ENCODE measurements at regions of chr13 and their contacts with region 1.

Region 1: DNA sequence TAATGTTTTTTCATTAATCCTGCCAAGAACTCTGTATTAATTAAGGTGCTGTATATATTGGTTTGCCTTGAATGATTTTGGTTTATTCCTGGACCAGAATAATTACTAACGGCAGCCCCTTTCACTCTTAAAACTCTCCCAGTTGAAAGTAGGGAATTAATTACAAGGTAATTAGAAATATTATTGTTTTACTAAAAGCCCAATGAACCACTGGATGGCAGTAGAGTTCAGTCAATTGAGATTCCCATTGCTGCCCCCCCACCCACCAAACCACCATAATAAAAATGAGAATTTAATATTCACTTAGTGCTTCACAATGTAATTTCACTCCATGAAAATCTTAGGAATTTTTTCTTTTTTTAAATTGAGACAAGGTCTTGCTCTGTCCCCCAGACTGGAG is 13.7 kb downstream of the WBP4 start:
- DNase-seq: no peak
- H3K4me3 ChIP-seq: no peak overlapping the region
- H3K27ac ChIP-seq: no peak overlapping the region
- H3K4me1 ChIP-seq: no peaks in the 10 kb centered on the region
- H3K27me3 ChIP-seq: no peaks in the 10 kb centered on the region
- CTCF ChIP-seq: peak; percentile 36 to 48 (median 46)
- EP300 ChIP-seq: no peak
- POLR2A ChIP-seq: no peak

Region 2: DNA sequence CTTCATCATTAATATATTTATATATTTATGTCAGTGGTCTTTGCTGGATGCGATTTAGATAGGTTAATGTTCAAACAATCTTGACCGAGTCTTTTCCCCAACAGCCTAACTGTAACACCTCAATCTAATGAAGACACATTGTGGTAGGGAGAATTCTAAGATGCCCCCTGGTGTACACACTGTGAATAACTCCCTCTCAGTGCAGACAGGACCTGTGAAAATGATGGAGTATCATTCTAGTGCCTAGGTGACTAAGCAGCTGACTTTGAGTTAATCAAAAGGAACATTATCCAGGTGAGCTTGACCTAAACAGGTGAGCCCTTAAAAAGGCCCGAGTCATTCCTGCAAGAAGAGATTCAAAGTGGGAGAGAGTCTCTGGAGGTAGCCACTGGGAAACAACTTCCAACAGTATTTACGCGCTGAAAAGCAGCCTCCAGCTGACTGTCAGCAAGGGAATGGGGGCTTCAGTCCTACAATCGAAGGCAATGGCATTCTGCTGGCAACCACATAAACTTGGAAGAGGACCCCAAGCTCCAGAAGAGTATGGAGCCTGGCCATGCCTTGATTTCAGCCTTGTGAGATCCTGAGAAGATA is 147.3 kb after region 1 on chr13:
- in situ Hi-C with region 1: loop called in 1 of 4 experiments (anchors 10 kb)
- intact Hi-C with region 1: loop called (anchors 5 kb)
- DNase-seq: peak; percentile 44
- H3K4me3 ChIP-seq: no peak overlapping the region
- H3K27ac ChIP-seq: no peak overlapping the region
- H3K4me1 ChIP-seq: no peaks in the 10 kb centered on the region
- H3K27me3 ChIP-seq: no peaks in the 10 kb centered on the region
- CTCF ChIP-seq: peak; percentile 72 to 83 (median 81)
- EP300 ChIP-seq: no peak
- POLR2A ChIP-seq: no peak

Measured in transverse colon (tissue), 4 donors.